ENCODE measurements at regions of chr17 and their contacts with region 1.

Region 1: DNA sequence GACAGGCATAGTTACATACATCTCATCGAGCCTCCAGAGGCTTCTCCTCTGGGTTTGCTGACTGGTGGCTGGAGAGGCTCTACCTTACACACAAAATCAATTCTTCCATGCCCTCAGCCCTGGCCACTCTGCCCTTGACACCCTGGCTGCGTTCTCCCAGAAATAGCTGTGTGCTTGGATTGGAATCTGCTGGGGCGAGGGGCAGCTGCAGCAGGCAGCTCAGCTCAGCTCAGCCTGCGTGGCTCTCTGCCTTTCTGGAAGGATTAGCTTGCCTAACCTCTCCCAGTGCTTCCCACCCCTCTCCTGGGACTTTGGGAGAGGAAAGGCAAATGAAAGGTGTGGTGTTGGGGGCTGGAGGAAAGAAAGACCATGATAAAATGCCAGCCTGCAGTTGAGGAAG is 216.1 kb downstream of the ENGASE start:
- DNase-seq: no peak
- H3K4me3 ChIP-seq: no peak overlapping the region
- H3K27ac ChIP-seq: no peak overlapping the region
- H3K4me1 ChIP-seq: peaks cover 0 to 3% of the 10 kb centered on the region in 2 experiments; a peak in 1 of 4 replicates
- H3K27me3 ChIP-seq: no peaks in the 10 kb centered on the region
- CTCF ChIP-seq: no peak
- EP300 ChIP-seq: no peak
- RAD21 ChIP-seq: no peak

Region 2: DNA sequence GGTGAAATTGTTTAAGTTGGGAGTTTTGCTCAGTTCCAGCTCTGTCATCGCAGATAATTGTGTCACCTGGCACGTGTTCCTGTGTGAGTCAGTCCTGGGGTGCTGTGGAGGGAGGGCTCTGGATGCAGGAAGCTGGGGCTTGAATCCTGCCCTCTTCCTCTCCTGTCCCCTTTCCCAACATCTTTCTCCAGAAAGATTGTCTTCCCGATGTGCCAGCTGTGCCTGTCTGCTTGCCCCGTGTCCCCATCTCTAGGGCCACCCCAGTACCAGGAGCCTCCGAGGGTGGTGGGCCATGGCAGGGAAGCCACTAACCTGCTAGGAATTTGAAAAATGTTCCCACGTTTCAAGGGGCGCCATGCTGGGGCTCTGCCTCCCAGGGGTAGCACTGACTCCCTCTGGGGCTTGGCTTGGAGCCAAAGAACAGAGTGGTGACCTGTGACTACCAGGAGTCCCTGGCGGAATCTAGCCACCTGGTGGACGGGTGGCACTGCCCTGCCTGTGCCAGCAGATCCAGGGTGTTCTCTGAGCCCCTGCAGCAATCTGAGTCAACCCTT is 18.0 kb before region 1 on chr17:
- CTCF ChIA-PET with region 1: interaction called, 11 read pairs
- POLR2A ChIA-PET with region 1: no interaction called
- DNase-seq: peak; percentile 85
- H3K4me3 ChIP-seq: no peak overlapping the region
- H3K27ac ChIP-seq: peak overlapping the region in 1 of 2 experiments; percentile 76; a peak in 2 of 4 replicates
- H3K4me1 ChIP-seq: peaks cover 0 to 47% of the 10 kb centered on the region in 2 experiments; a peak in 1 of 4 replicates
- H3K27me3 ChIP-seq: 0 out of 2 replicates have a peak, but pooled peaks cover 9% of the 10 kb centered on the region
- CTCF ChIP-seq: no peak
- EP300 ChIP-seq: no peak
- RAD21 ChIP-seq: no peak; the same call in 1 of the 2 replicates

Region 3: DNA sequence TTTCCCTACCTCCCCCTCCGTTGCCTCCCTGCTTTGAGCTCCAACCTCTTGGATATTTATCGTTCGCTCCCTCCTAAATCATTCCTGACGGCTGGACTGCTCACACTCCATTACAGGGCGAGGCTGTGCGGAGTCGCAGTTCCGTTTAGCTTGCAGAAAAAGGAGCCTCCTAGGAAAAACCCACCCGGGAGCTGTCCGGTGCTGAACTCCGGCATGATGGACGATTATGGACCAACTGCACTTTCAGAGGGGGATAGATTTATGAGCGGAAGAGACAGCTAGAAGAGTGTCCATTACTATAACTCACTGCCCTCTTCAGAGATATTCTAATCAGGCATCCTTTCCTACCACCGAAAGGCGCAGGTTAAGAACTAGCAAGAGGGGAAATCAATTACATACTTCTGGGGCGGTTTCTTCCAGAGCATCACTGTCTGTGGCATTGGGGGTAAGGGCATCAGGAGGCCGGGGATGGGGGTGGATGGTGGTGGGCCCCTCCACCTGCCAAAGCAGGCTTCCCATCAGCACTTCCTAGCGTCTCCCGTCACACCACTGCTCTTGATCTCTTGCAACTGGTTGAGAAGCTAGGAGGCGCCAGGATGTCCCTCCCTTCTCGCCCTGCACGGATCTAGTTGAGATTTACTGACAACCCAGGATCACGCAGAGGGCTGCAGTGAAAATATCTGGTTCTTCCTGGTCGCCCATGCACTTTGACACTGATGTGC is 35.1 kb after region 1 on chr17:
- CTCF ChIA-PET with region 1: interaction called, 12 read pairs
- POLR2A ChIA-PET with region 1: no interaction called
- DNase-seq: no peak
- H3K4me3 ChIP-seq: no peak overlapping the region
- H3K27ac ChIP-seq: no peak overlapping the region
- H3K4me1 ChIP-seq: no peaks in the 10 kb centered on the region; a peak in 1 of 4 replicates
- H3K27me3 ChIP-seq: no peaks in the 10 kb centered on the region
- CTCF ChIP-seq: no peak
- EP300 ChIP-seq: no peak
- RAD21 ChIP-seq: no peak

Region 4: DNA sequence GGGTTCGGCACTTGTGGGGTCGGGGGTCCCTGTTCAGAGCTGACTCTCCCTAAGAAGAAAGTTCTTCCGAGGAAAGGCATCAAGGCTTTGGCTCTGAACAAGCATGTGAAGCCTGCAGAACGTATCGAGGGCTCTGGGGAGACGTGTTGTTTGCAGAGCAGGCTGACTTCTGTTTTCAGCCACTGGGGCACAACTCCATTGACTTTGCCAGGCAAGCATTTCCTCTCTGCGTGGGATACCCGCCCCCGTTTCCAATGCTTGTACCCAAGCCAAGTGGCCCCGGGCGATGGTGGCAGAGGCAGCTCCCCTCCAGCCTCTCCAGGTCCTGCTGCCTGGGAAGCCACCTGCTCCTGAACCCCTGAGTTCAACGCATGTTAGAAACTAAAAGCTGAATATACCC is 64.4 kb after region 1 on chr17:
- CTCF ChIA-PET with region 1: no interaction called
- POLR2A ChIA-PET with region 1: no interaction called
- DNase-seq: peak; percentile 61
- H3K4me3 ChIP-seq: no peak overlapping the region
- H3K27ac ChIP-seq: no peak overlapping the region
- H3K4me1 ChIP-seq: no peaks in the 10 kb centered on the region
- H3K27me3 ChIP-seq: peaks cover 51% of the 10 kb centered on the region
- CTCF ChIP-seq: no peak
- EP300 ChIP-seq: no peak
- RAD21 ChIP-seq: no peak

Measured in SK-N-SH (cell line).